MCF 10A (cell line): ENCODE measurements at regions of chr9 and their contacts with region 1.

Region 1: DNA sequence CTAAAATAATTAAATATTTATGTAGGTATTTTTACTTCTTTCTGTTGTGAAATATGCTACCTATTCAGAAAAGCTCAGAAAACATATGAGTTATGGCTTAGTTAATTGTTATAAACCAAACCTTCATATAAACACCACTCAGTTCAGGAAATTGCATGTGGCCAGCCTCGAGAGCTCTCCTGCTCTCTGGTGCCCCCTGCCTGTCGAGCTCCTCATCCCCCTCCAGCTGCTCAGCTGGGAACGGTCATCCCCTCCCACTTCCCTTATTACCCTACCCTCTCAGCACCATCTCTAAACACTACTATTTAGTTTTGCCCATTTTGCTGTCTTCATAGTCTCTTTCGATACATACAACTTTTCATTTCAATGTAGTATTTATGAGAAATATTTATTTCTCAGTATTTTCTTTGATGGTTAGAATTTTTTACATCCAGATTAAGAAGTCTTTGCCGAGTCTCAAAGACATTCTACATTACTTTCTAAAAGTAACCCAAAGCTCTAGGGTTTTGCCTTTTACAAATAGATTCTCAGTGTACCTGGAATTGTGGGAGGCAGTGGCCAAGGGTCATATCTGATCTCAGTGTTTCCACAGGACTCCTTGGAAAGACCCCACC is 51.2 kb upstream of the SEMA4D start:
- DNase-seq: peak; percentile 74
- H3K4me3 Mint-ChIP-seq: no peak overlapping the region
- H3K27ac Mint-ChIP-seq: no peak overlapping the region
- H3K4me1 Mint-ChIP-seq: peaks cover 3% of the 10 kb centered on the region
- H3K27me3 Mint-ChIP-seq: no peaks in the 10 kb centered on the region
- CTCF ChIP-seq: peak; percentile 83

Region 2: DNA sequence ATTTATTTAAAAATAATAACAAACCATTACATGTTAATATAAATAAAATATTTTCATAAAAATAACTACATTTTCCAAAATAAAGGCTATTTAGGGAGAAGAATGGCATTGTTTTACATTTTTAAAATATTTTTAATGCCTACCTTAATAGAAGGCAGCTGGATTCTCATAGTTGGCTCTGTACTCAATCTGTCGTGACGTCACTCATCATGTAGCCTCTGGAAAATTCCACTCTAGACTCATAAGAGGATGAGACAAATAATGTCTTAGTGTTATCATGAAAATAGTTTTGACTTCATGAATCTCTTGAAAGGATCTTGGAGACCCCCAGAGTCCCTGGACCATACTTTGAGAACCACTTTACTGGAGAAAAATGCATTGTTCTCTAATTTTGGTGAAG is 921.0 kb before region 1 on chr9:
- CTCF ChIA-PET with region 1: no interaction called
- POLR2A ChIA-PET with region 1: no interaction called
- intact Hi-C with region 1: no loop called
- DNase-seq: no peak
- H3K4me3 Mint-ChIP-seq: no peak overlapping the region
- H3K27ac Mint-ChIP-seq: no peak overlapping the region
- H3K4me1 Mint-ChIP-seq: no peaks in the 10 kb centered on the region
- H3K27me3 Mint-ChIP-seq: no peaks in the 10 kb centered on the region
- CTCF ChIP-seq: no peak

Region 3: GRCh38 chr9:89318123-89319014 is 230.8 kb before region 1 on chr9 and contains the start of gene SECISBP2:
- CTCF ChIA-PET with region 1: interaction called, 33 read pairs
- POLR2A ChIA-PET with region 1: interaction called, 13 read pairs
- intact Hi-C with region 1: loop called (anchors 1 kb)
- DNase-seq: peak; percentile 96
- H3K4me3 Mint-ChIP-seq: peak within 1 kb of the TSS; percentile 88
- H3K27ac Mint-ChIP-seq: peak within 1 kb of the TSS; percentile 97
- H3K4me1 Mint-ChIP-seq: peaks cover 36% of the 10 kb centered on the region
- H3K27me3 Mint-ChIP-seq: no peaks in the 10 kb centered on the region
- CTCF ChIP-seq: no peak
- total RNA-seq, gene SECISBP2: 36.4 and 38.9 TPM in 2 replicates

Region 4: DNA sequence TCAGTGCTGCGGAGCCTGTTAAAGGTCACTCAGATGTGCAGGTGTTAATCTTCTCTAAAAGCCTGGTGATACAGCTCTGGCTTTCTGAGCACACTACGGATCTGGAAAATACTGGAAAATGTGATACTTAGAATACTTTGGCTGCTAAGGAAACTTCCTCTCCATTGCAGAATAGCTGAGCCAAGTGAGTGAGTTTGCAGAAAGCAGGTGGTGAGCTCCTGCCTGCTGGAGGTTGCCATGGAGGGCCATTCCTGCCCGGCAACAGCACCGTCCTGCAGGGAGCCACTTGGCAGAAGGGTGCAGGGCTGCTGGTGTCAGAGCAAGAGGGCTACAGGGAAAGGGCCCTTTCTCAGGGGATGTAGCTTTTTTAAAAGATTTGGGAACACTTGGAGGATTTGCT is 190.2 kb before region 1 on chr9:
- CTCF ChIA-PET with region 1: interaction called, 11 read pairs
- POLR2A ChIA-PET with region 1: no interaction called
- intact Hi-C with region 1: no loop called
- DNase-seq: no peak
- H3K4me3 Mint-ChIP-seq: no peak overlapping the region
- H3K27ac Mint-ChIP-seq: peak overlapping the region; percentile 51
- H3K4me1 Mint-ChIP-seq: no peaks in the 10 kb centered on the region
- H3K27me3 Mint-ChIP-seq: no peaks in the 10 kb centered on the region
- CTCF ChIP-seq: no peak

Region 5: DNA sequence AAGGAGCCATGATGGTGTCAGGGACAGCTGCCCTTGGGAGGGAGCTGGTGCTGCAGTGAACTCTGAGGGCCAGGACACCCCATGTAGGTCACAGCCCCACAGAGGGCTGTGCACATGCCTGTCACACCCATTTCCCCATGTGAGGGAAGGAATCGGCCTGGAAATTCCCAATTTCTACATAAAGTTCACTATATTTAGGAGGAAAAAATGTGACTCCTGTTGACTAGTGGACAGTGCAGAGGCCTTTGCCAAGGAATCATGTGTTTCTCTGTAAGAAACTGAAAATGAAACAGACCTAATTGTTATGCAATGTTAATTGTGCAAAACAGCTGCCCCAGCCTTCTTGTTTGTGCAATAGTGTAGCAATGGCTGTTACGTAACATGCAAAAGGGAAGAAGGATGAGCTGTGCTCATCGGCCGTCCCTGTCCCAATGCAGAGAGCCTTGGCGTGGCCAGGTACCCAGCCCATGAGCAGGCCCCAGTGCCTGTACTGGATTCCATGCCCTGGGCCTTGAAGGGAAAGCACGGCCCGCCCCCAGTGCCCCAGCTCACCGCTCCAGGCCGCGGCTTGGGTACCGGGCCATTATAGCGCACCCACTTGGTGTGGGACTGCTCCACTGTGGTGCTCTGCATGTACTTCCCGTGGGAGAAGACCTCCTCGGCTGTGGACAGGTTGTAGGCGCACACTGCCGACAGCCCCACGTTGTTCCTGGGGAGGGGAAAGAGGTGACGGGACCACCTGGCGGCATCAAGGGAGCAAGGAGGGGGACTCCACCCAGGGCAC is 160.9 kb before region 1 on chr9:
- CTCF ChIA-PET with region 1: interaction called, 11 read pairs
- POLR2A ChIA-PET with region 1: interaction called, 7 read pairs
- intact Hi-C with region 1: no loop called
- DNase-seq: peak; percentile 94
- H3K4me3 Mint-ChIP-seq: no peak overlapping the region
- H3K27ac Mint-ChIP-seq: peak overlapping the region; percentile 54
- H3K4me1 Mint-ChIP-seq: peaks cover 4% of the 10 kb centered on the region
- H3K27me3 Mint-ChIP-seq: no peaks in the 10 kb centered on the region
- CTCF ChIP-seq: no peak

Region 6: DNA sequence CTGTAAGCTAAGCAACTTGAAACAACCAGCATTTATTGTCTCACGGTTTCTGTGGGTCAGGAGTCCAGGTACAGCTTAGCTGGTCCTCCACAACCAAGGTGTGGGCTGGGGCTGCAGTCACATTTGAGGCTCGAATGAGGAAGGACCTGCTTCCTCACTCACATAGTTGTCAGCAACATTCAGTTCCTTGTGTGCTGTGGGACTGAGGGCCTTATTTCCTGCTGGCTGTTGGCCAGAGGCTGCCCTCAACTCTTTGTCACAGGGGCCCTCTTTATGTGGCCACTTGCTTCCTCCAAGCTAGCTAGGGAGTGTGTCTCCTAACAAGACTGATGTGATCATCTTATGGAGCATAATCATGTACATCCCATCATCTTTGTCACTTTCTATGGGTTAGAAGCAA is 22.1 kb before region 1 on chr9:
- CTCF ChIA-PET with region 1: interaction called, 28 read pairs
- POLR2A ChIA-PET with region 1: no interaction called
- intact Hi-C with region 1: no loop called
- DNase-seq: no peak
- H3K4me3 Mint-ChIP-seq: no peak overlapping the region
- H3K27ac Mint-ChIP-seq: no peak overlapping the region
- H3K4me1 Mint-ChIP-seq: peaks cover 6% of the 10 kb centered on the region
- H3K27me3 Mint-ChIP-seq: peaks cover 26% of the 10 kb centered on the region
- CTCF ChIP-seq: no peak

Region 7: GRCh38 chr9:89538871-89539270 is 10.3 kb before region 1 on chr9:
- CTCF ChIA-PET with region 1: interaction called, 24 read pairs
- POLR2A ChIA-PET with region 1: no interaction called
- intact Hi-C with region 1: no loop called
- DNase-seq: no peak
- H3K4me3 Mint-ChIP-seq: no peak overlapping the region
- H3K27ac Mint-ChIP-seq: no peak overlapping the region
- H3K4me1 Mint-ChIP-seq: peaks cover 11% of the 10 kb centered on the region
- H3K27me3 Mint-ChIP-seq: no peaks in the 10 kb centered on the region
- CTCF ChIP-seq: no peak